ENCODE measurements at regions of chr11 and their contacts with region 1.

Region 1: DNA sequence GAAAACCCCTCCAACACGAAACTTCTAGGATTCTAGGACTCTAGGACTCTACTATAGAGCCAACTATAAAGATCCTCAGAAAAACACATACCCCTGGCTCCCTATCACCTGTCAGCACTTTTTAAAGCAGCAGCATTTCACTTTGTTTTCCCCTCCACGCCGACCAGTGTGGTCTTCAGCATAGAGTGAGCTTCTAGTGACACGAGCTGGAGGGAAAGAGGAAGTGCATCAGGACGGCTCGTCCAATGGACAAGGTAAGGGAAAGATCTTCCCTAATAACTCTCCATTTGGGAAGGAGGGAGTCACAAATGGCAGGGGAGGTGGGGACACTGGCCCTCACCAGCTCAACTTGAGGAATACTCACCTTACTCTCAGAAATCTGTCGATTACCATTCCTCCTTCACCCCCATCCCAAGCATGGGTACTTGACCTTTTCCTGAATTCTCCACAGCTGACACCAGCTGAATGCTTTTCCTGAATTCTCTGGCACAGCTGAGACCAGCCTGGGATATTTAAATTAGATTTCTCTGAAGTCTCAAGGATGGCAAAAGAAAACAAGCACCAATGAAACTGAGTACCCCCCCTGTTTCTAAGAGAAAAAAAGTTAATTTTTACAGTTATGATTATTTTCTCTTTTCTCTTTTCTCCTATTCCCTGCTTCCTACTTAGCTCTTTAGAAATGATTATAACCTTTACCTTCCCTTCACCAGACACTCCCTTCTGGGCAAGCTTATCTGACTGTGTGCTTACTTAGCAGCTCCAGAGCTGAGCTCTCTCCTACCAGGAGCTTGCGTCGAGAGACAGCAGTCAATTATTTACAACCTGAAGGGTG is 33.3 kb upstream of the NNMT start:
- DNase-seq: peak in 1 of 2 donors; percentile 44
- ATAC-seq: no peak
- H3K4me3 ChIP-seq: no peak overlapping the region
- H3K27ac ChIP-seq: peak overlapping the region in 3 of 4 donors; percentile 44 to 98 (median 93)
- H3K4me1 ChIP-seq: peaks cover 27 to 38% of the 10 kb centered on the region in 2 donors
- H3K27me3 ChIP-seq: no peaks in the 10 kb centered on the region
- CTCF ChIP-seq: peak; percentile 31 to 66 (median 41)
- POLR2A ChIP-seq: peak in 1 of 2 donors; percentile 8

Region 2: GRCh38 chr11:113875234-113876073 is 387.4 kb before region 1 on chr11 and contains the start of gene USP28:
- in situ Hi-C with region 1: loop called in 1 of 4 experiments (anchors 25 kb)
- intact Hi-C with region 1: no loop called
- DNase-seq: peak; percentile 96 to 97
- ATAC-seq: peak; percentile 74 to 75
- H3K4me3 ChIP-seq: peak within 1 kb of the TSS; percentile 71 to 85 (median 80)
- H3K27ac ChIP-seq: peak within 1 kb of the TSS; percentile 92 to 99 (median 96)
- H3K4me1 ChIP-seq: peaks cover 38 to 43% of the 10 kb centered on the region in 2 donors
- H3K27me3 ChIP-seq: no peaks in the 10 kb centered on the region
- CTCF ChIP-seq: peak in 3 of 5 experiments; percentile 13 to 44 (median 15)
- POLR2A ChIP-seq: peak; percentile 93 to 98
- total RNA-seq, gene USP28: 56.7 to 141 (median 80.4) TPM

Region 3: GRCh38 chr11:113896156-113896879 is 366.6 kb before region 1 on chr11:
- in situ Hi-C with region 1: loop called in 2 of 4 experiments (anchors 10 to 25 kb)
- intact Hi-C with region 1: loop called (anchors 5 kb)
- DNase-seq: peak in 1 of 2 donors; percentile 21
- ATAC-seq: peak; percentile 70 to 78
- H3K4me3 ChIP-seq: no peak overlapping the region
- H3K27ac ChIP-seq: peak overlapping the region; percentile 65 to 81 (median 72)
- H3K4me1 ChIP-seq: peaks cover 11 to 12% of the 10 kb centered on the region in 2 donors
- H3K27me3 ChIP-seq: no peaks in the 10 kb centered on the region
- CTCF ChIP-seq: peak; percentile 60 to 79 (median 74)
- POLR2A ChIP-seq: no peak

Region 4: DNA sequence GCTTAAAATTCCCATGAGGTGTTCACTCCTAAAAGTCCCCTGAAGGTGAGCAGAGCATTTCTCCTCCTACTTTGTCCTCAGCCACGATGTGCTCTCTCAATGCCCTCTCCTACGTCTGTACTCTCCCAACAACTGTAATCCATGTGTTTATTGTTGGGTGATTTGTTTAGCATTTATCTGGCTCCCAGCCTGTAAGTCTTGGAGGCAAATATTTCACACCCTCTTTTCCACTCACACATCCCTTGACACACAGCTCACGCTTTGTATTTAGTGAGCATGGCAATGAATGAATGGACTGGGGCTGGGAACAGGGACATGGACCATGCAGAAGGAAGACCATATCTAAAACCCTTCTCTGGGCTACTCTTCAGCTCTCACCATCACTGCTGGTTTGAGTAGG is 265.4 kb before region 1 on chr11:
- in situ Hi-C with region 1: no loop called
- intact Hi-C with region 1: loop called (anchors 5 kb)
- DNase-seq: no peak
- ATAC-seq: no peak
- H3K4me3 ChIP-seq: no peak overlapping the region
- H3K27ac ChIP-seq: no peak overlapping the region
- H3K4me1 ChIP-seq: no peaks in the 10 kb centered on the region
- H3K27me3 ChIP-seq: no peaks in the 10 kb centered on the region
- CTCF ChIP-seq: no peak
- POLR2A ChIP-seq: no peak

Region 5: DNA sequence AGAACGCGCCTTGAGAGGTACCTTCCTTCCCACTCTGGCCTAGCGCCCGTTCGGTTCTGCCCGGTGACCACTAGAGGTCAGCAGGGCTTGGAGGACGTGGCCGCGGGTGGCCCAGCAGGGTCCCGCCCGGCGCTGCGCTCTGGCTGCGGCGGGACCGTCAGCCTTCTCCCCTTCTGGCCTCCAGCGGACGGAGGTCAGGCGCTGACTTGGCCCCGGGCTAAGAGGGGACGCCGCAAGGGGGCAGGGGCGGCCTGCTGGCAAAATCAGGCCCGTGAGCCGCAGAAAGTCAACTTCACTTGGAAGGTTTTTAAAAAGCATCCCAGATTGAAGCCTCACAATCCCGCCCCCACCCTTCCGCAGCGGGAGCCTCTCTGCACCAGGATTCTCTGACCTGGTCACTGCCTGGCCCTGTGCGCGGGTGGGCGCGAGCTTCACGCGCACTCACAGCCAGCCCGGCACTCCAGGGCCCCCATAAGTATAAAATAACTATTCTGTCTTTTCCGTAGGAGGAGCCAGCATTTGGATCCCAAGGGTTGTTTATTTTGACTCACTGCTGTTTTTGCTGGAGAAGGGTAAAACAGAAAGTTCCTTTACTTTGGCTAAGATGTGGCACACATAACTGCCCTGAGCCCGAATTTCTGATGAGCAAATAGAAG is 226.6 kb before region 1 on chr11:
- in situ Hi-C with region 1: loop called (anchors 5 to 10 kb)
- intact Hi-C with region 1: loop called (anchors 1 kb)
- DNase-seq: peak; percentile 83 to 86
- ATAC-seq: peak; percentile 67 to 76
- H3K4me3 ChIP-seq: peak overlapping the region; percentile 44 to 51 (median 48)
- H3K27ac ChIP-seq: peak overlapping the region; percentile 67 to 85 (median 76)
- H3K4me1 ChIP-seq: peaks cover 27 to 40% of the 10 kb centered on the region in 2 donors
- H3K27me3 ChIP-seq: no peaks in the 10 kb centered on the region
- CTCF ChIP-seq: peak; percentile 84 to 93 (median 93)
- POLR2A ChIP-seq: peak; percentile 13 to 50

Region 6: DNA sequence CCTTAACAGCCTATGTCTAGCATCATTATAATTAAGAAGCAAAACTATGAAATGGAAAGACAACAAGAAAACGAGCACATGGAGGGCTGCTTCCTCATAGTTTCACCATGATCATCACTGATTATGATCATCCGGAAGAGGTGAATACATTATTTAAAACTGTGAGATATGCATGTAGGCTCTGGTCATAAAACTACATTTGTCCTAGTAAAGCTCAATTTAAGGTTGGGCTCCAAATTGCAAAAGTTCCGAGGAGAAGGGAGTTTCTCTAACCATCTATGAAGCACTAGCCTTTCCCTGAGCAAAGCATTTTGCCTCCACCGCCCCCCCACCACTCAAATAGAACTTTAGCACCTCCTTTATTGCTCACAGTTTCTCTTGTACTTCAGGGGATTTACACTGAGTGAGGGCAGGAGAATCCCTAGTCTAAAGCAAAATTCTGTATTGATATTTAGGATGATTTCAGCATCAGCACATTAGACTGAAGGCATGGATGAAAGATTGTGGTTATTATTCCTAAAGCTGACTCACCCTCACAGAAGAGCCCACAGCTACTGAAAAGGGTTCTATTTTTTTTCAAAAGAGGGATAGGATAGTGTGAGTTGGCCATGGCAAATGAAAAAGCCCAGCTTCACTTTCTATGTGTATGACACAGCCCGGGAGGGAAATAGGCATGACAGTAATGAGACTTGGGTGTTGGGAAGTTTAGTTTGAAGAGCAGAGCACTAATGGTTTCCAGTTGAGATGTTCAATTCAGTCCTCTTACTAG is 1037.9 kb after region 1 on chr11:
- in situ Hi-C with region 1: no loop called
- intact Hi-C with region 1: no loop called
- DNase-seq: no peak
- ATAC-seq: no peak
- H3K4me3 ChIP-seq: no peak overlapping the region
- H3K27ac ChIP-seq: no peak overlapping the region
- H3K4me1 ChIP-seq: peaks cover 5 to 10% of the 10 kb centered on the region in 2 donors
- H3K27me3 ChIP-seq: no peaks in the 10 kb centered on the region
- CTCF ChIP-seq: no peak
- POLR2A ChIP-seq: no peak